HepG2 (cell line): ENCODE measurements at regions of chr19 and their contacts with region 1.

Region 1: DNA sequence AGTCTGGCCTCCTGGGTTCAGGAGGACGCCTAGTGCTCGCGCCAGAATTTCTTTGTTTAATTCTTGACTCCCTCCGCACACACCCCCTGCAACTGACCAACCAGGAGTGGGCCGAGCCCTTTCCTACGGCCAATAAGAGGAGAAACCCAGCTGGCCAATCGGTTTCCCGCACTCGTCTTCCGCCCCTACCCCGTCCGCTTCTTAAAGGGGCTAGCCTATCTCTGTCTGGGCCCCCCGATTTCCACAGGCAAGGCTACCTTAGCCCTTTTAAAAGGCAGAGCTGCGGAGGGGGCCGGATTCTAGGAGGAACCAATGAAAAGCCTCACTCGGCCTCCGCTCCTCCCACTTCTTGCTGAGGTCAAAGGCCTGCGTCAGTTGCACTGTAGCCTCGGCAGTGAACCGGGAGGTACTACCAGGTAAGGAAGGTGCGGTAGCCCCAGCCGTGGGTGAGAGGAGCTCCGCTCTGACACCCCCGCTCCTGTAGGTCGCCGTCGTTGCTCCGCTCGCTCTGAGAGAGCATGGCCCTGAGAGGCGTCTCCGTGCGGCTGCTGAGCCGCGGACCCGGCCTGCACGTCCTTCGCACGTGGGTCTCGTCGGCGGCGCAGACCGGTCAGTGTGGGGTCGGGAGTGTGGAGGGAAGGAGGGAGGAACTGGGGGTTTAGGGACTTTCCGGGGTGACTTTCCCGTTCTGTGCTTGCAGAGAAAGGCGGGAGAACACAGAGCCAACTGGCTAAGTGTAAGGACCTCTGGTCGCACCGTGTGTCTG is at the start of gene GCDH:
- DNase-seq: peak; percentile 99
- ATAC-seq: peak; percentile 94
- H3K4me3 ChIP-seq: peak within 1 kb of the TSS; percentile 67 to 95 (median 94)
- H3K27ac ChIP-seq: peak within 1 kb of the TSS; percentile 84
- H3K4me1 ChIP-seq: peaks cover 43% of the 10 kb centered on the region
- H3K27me3 ChIP-seq: peaks cover 0 to 15% of the 10 kb centered on the region in 2 experiments; a peak in 3 of 5 replicates
- CTCF ChIP-seq: peak; percentile 10; the same call in 1 of the 2 replicates
- EP300 ChIP-seq: no peak
- POLR2A ChIP-seq: peak; percentile 95
- RAD21 ChIP-seq: no peak
- total RNA-seq, gene GCDH: 35.0 and 38.0 TPM in 2 replicates

Region 2: DNA sequence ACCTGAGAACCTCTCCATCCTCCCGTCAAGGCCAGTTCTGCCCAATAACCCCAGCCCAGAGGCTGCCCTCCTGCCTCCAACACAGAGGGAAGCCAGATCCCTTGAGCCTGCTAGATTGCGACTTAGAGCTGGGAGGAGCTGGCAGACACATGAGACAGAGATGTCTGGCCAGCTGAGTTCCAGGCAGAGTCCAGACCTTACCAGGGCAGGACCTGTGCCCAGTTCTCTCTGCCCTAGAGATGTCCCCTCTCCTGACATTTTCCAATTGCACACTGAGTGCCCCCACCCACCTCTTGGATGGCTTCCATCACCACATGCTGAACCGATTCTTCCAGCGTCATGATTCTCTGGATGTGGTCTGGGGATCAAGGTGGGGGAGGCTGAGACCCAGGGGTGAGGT is 118.6 kb before region 1 on chr19:
- CTCF ChIA-PET with region 1: no interaction called
- POLR2A ChIA-PET with region 1: no interaction called
- in situ Hi-C with region 1: no loop called
- intact Hi-C with region 1: no loop called
- DNase-seq: no peak
- ATAC-seq: no peak
- H3K4me3 ChIP-seq: no peak overlapping the region
- H3K27ac ChIP-seq: no peak overlapping the region
- H3K4me1 ChIP-seq: peaks cover 10% of the 10 kb centered on the region
- H3K27me3 ChIP-seq: no peaks in the 10 kb centered on the region
- CTCF ChIP-seq: no peak
- EP300 ChIP-seq: no peak
- POLR2A ChIP-seq: no peak
- RAD21 ChIP-seq: no peak

Region 3: GRCh38 chr19:12864721-12865715 is 26.0 kb before region 1 on chr19:
- CTCF ChIA-PET with region 1: no interaction called
- POLR2A ChIA-PET with region 1: interaction called, 15 read pairs
- in situ Hi-C with region 1: no loop called
- intact Hi-C with region 1: no loop called
- DNase-seq: peak; percentile 75
- ATAC-seq: peak; percentile 85
- H3K4me3 ChIP-seq: peak overlapping the region in 1 of 3 experiments; percentile 13; a peak in 1 of 6 replicates
- H3K27ac ChIP-seq: peak overlapping the region; percentile 0
- H3K4me1 ChIP-seq: peaks cover 19% of the 10 kb centered on the region
- H3K27me3 ChIP-seq: no peaks in the 10 kb centered on the region
- CTCF ChIP-seq: peak; percentile 74
- EP300 ChIP-seq: no peak; a peak in 1 of 4 replicates
- POLR2A ChIP-seq: peak in 1 of 2 experiments; percentile 36; a peak in 1 of 4 replicates
- RAD21 ChIP-seq: peak; percentile 59; the same call in 1 of the 2 replicates

Region 4: DNA sequence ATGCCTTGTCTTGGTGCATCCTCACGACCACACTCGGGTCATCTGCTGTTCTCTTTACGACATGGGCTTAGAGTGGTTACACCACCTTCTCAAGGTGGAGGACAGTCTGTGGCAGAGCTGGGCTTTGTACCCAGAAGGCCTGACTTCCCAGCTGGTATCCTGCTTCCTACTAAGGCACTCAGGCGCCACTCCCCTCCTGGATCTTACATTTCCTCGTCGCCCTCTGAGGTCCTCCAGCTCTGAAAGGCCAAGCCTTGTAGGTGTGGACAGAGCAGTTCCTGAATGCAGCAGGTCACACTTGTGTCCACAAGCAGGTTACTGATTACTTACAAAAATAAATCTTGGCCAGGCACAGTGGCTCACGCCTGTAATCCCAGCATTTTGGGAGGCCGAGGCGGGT is 16.2 kb after region 1 on chr19:
- CTCF ChIA-PET with region 1: no interaction called
- POLR2A ChIA-PET with region 1: interaction called, 26 read pairs
- in situ Hi-C with region 1: no loop called
- intact Hi-C with region 1: no loop called
- DNase-seq: no peak
- ATAC-seq: no peak
- H3K4me3 ChIP-seq: no peak overlapping the region
- H3K27ac ChIP-seq: no peak overlapping the region
- H3K4me1 ChIP-seq: peaks cover 7% of the 10 kb centered on the region
- H3K27me3 ChIP-seq: no peaks in the 10 kb centered on the region
- CTCF ChIP-seq: no peak
- EP300 ChIP-seq: no peak
- POLR2A ChIP-seq: no peak
- RAD21 ChIP-seq: no peak

Region 5: DNA sequence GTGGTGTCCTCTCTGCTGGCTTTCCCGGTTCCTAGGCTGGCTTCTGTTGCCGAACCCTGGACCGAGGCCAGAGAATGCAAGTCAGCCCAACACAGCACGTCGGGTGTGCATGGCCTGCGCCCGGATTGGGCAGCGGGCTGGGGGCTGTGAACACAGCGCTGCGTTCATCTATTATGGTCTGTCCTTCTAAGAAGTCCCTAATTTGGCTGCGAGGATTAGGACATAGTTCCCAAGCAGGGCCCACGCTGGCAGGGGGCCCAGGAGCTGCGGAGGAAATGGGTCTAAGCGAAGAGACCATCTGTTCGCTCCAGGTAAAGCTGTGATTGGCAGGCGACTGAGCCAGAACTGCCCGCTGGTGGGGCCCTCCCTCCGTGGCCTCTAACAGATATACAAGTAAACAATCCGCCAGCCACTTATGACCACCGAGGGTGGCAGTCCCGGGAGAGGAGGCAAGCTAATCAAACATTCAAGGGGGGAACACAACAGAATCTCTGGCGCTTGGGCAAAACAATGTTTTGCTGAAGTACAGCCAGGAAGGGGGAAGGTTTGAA is 22.1 kb after region 1 on chr19:
- CTCF ChIA-PET with region 1: no interaction called
- POLR2A ChIA-PET with region 1: interaction called, 26 read pairs
- in situ Hi-C with region 1: no loop called
- intact Hi-C with region 1: no loop called
- DNase-seq: peak; percentile 62
- ATAC-seq: peak; percentile 86
- H3K4me3 ChIP-seq: peak overlapping the region; percentile 48 to 63 (median 55)
- H3K27ac ChIP-seq: peak overlapping the region; percentile 65
- H3K4me1 ChIP-seq: peaks cover 30% of the 10 kb centered on the region
- H3K27me3 ChIP-seq: no peaks in the 10 kb centered on the region
- CTCF ChIP-seq: no peak
- EP300 ChIP-seq: no peak
- POLR2A ChIP-seq: 0 out of 4 replicates have a peak, but pooled peaks have one; percentile 12 to 13
- RAD21 ChIP-seq: no peak

Region 6: GRCh38 chr19:12938234-12939025 is 47.5 kb after region 1 on chr19 and contains the start of gene CALR:
- CTCF ChIA-PET with region 1: no interaction called
- POLR2A ChIA-PET with region 1: interaction called, 21 read pairs
- in situ Hi-C with region 1: no loop called
- intact Hi-C with region 1: no loop called
- DNase-seq: peak; percentile 98
- ATAC-seq: peak; percentile 91
- H3K4me3 ChIP-seq: peak within 1 kb of the TSS; percentile 84 to 97 (median 88)
- H3K27ac ChIP-seq: peak within 1 kb of the TSS; percentile 79
- H3K4me1 ChIP-seq: peaks cover 51% of the 10 kb centered on the region
- H3K27me3 ChIP-seq: peaks cover 0 to 5% of the 10 kb centered on the region in 2 experiments; a peak in 1 of 5 replicates
- CTCF ChIP-seq: no peak
- EP300 ChIP-seq: no peak; a peak in 1 of 4 replicates
- POLR2A ChIP-seq: peak; percentile 98 to 99
- RAD21 ChIP-seq: peak; percentile 11; the same call in 1 of the 2 replicates
- total RNA-seq, gene CALR: 420 and 898 TPM in 2 replicates